Gastrocnemius medialis (tissue), 4 donors: ENCODE measurements at regions of chr6 and their contacts with region 1.

Region 1: DNA sequence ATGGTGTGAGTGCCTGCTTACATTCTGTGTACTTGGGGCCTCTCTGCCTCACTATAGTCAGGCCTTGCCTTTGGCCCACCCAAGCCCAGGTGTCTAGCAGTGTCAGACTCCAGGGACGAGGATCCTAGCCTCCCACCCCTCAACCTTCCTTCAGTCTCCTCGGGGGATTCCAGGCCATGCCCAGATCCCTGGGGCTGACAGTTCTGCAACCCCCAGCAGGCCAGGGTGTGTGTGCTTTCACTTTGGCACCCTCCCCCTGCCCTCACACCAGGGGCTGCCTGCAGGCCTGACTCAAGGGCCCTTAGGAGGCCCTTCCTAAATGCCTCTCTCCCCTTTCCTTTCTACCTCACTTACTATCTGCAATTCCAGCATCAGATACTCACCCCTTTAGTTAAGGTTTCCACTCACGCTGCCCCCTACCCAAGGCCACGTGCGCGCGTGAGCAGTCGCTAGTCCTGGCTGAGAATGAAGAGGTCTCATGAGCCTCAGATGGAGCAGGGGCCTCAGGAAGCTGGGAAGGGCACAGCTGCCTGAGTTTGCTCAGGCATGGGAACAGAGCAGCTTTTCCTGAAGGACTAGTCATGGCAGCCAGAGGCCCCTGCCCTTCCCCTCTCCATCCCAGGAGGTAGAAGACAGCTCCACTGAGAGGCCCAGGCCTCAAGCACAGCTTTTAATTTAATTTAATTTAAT is 859 bp upstream of the CLPS start:
- DNase-seq: no peak
- ATAC-seq: no peak
- H3K4me3 ChIP-seq: no peak overlapping the region
- H3K27ac ChIP-seq: no peak overlapping the region
- H3K4me1 ChIP-seq: no peaks in the 10 kb centered on the region
- H3K27me3 ChIP-seq: peaks cover 0 to 16% (median 0%) of the 10 kb centered on the region in 3 donors
- CTCF ChIP-seq: no peak
- POLR2A ChIP-seq: no peak

Region 2: GRCh38 chr6:34630040-34630439 is 1167.9 kb before region 1 on chr6:
- in situ Hi-C with region 1: no loop called
- intact Hi-C with region 1: no loop called
- DNase-seq: no peak
- ATAC-seq: no peak
- H3K4me3 ChIP-seq: no peak overlapping the region
- H3K27ac ChIP-seq: no peak overlapping the region
- H3K4me1 ChIP-seq: peaks cover 11 to 17% of the 10 kb centered on the region in 2 donors
- H3K27me3 ChIP-seq: no peaks in the 10 kb centered on the region
- CTCF ChIP-seq: no peak
- POLR2A ChIP-seq: no peak

Region 3: DNA sequence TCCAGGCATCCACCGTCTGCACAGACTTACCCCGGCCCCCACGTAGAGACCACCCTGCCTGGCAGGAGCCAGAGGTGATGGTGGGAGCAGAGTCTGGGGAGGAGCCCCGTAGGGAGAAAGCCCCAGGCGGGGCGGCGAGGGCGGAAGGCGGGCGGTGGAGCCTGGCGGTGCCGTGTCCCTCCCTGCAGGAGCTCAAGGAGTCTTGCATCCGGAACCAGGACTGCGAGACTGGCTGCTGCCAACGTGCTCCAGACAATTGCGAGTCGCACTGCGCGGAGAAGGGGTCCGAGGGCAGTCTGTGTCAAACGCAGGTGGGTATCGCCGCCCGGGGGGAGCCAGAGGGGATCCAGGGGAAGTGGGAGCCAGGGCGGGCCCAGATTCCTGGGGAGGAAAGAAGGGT is 11.2 kb before region 1 on chr6:
- in situ Hi-C with region 1: no loop called
- intact Hi-C with region 1: loop called (anchors 1 kb)
- DNase-seq: no peak
- ATAC-seq: no peak
- H3K4me3 ChIP-seq: no peak overlapping the region
- H3K27ac ChIP-seq: no peak overlapping the region
- H3K4me1 ChIP-seq: no peaks in the 10 kb centered on the region
- H3K27me3 ChIP-seq: peaks cover 24 to 46% (median 44%) of the 10 kb centered on the region in 3 donors
- CTCF ChIP-seq: no peak
- POLR2A ChIP-seq: no peak

Region 4: GRCh38 chr6:35948725-35949124 is 150.7 kb after region 1 on chr6:
- in situ Hi-C with region 1: no loop called
- intact Hi-C with region 1: no loop called
- DNase-seq: no peak
- ATAC-seq: no peak
- H3K4me3 ChIP-seq: no peak overlapping the region
- H3K27ac ChIP-seq: no peak overlapping the region
- H3K4me1 ChIP-seq: no peaks in the 10 kb centered on the region
- H3K27me3 ChIP-seq: no peaks in the 10 kb centered on the region
- CTCF ChIP-seq: no peak
- POLR2A ChIP-seq: no peak